Aorta (tissue), 5 donors: ENCODE measurements at regions of chr9 and their contacts with region 1.

Region 1: DNA sequence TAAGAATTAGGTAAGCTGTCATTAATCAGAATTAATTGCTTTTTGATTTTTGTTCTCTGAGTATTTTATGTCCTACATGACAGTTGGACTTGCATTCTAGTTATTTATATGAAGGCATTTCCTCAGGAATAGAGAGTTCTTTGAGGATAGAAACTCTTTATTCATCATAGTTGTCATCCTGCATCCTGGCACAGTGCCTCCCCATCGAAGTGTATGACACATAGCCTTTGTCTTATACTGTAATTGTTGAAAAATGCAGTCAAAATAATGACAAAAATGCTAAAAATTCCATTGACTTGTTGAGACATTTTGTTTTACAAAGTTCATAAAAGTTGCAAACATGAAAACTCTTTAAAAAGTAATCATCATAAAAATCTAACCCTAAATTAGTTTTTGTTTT is 36.5 kb downstream of the CFAP95 start:
- DNase-seq: no peak
- ATAC-seq: no peak
- H3K4me3 ChIP-seq: no peak overlapping the region
- H3K27ac ChIP-seq: no peak overlapping the region
- H3K4me1 ChIP-seq: no peaks in the 10 kb centered on the region
- H3K27me3 ChIP-seq: peaks cover 0 to 4% of the 10 kb centered on the region in 2 donors

Region 2: GRCh38 chr9:69745716-69746437 is 111.3 kb before region 1 on chr9:
- intact Hi-C with region 1: no loop called
- DNase-seq: no peak
- ATAC-seq: no peak
- H3K4me3 ChIP-seq: no peak overlapping the region
- H3K27ac ChIP-seq: no peak overlapping the region
- H3K4me1 ChIP-seq: no peaks in the 10 kb centered on the region
- H3K27me3 ChIP-seq: no peaks in the 10 kb centered on the region

Region 3: GRCh38 chr9:69798744-69799143 is 58.4 kb before region 1 on chr9:
- intact Hi-C with region 1: loop called in 1 of 2 experiments (anchors 10 kb)
- DNase-seq: no peak
- ATAC-seq: no peak
- H3K4me3 ChIP-seq: no peak overlapping the region
- H3K27ac ChIP-seq: no peak overlapping the region
- H3K4me1 ChIP-seq: no peaks in the 10 kb centered on the region
- H3K27me3 ChIP-seq: no peaks in the 10 kb centered on the region

Region 4: GRCh38 chr9:69949396-69949795 is 92.3 kb after region 1 on chr9:
- intact Hi-C with region 1: no loop called
- DNase-seq: no peak
- ATAC-seq: no peak
- H3K4me3 ChIP-seq: no peak overlapping the region
- H3K27ac ChIP-seq: no peak overlapping the region
- H3K4me1 ChIP-seq: no peaks in the 10 kb centered on the region
- H3K27me3 ChIP-seq: peaks cover 0 to 1% of the 10 kb centered on the region in 2 donors